Left cardiac atrium (tissue), 4 donors: ENCODE measurements at regions of chr2 and their contacts with region 1.

Region 1: DNA sequence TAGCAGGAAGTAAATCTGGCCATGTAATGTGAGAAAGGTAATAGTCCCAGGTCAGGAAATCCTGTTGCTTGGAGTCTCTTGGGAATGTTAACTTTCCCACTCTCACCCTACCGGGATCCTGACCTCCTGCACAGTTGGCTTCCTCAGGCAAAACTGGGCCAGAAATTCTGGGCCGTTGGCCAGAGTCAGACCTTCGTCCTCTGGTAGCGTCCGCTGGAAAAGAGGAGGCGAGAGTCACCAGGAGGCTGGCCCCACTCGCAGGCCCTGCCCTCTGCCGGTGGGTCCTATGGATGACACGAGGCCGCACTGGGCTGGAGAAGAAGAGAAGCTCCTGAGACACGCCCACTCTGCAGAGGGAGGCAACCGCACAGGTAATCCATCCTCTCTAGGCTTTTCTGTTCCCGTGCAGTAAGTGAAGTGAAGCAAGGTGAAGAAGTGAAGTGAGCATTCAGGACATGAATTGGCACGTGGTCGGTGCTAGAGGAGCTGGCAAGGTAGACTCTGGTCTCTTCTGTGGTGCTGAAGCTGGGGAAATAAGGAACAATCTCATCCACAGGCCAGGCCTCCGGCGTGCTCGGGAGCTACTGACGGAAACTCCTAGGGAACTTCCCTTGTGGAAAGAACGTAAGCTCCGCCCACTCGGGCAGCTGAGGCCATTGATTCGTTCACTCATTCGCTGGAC is 182.7 kb upstream of the GLI2 start:
- DNase-seq: peak; percentile 90
- ATAC-seq: peak; percentile 93 to 95

Region 2: GRCh38 chr2:120343433-120344105 is 209.4 kb before region 1 on chr2:
- intact Hi-C with region 1: loop called in 1 of 2 experiments (anchors 2 kb)
- DNase-seq: peak; percentile 87
- ATAC-seq: peak; percentile 87 to 91

Region 3: GRCh38 chr2:120441744-120442471 is 111.0 kb before region 1 on chr2:
- intact Hi-C with region 1: loop called in 1 of 2 experiments (anchors 10 kb)
- DNase-seq: peak; percentile 67
- ATAC-seq: peak; percentile 64 to 75

Region 4: GRCh38 chr2:120680136-120680761 is 127.3 kb after region 1 on chr2:
- intact Hi-C with region 1: loop called in 1 of 2 experiments (anchors 10 kb)
- DNase-seq: peak; percentile 89
- ATAC-seq: peak; percentile 73 to 81